Heart left ventricle (tissue), 16 donors: ENCODE measurements at regions of chr4 and their contacts with region 1.

Region 1: GRCh38 chr4:169270810-169271691 is at the start of gene SH3RF1:
- DNase-seq: peak; percentile 91 to 94 (median 92)
- ATAC-seq: peak; percentile 96 to 98 (median 96)
- H3K4me3 ChIP-seq: peak within 1 kb of the TSS; percentile 73 to 99 (median 92)
- H3K27ac ChIP-seq: peak within 1 kb of the TSS; percentile 87 to 95 (median 92)
- H3K4me1 ChIP-seq: peaks cover 0 to 47% (median 21%) of the 10 kb centered on the region in 12 donors
- H3K27me3 ChIP-seq: no peaks in the 10 kb centered on the region
- CTCF ChIP-seq: peak in 10 of 12 donors; percentile 27 to 58 (median 44)
- POLR2A ChIP-seq: peak; percentile 7 to 87
- total RNA-seq, gene SH3RF1: 7.1 to 17.2 (median 10.2) TPM

Region 2: GRCh38 chr4:169024762-169025161 is 246.3 kb before region 1 on chr4:
- intact Hi-C with region 1: loop called in 7 of 10 experiments (anchors 2 to 10 kb)
- DNase-seq: peak in 1 of 5 donors; percentile 17
- ATAC-seq: peak; percentile 58 to 87 (median 82)
- H3K4me3 ChIP-seq: no peak overlapping the region
- H3K27ac ChIP-seq: no peak overlapping the region
- H3K4me1 ChIP-seq: peaks cover 0 to 4% (median 0%) of the 10 kb centered on the region in 12 donors
- H3K27me3 ChIP-seq: no peaks in the 10 kb centered on the region
- CTCF ChIP-seq: peak; percentile 47 to 74 (median 68)
- POLR2A ChIP-seq: no peak

Region 3: DNA sequence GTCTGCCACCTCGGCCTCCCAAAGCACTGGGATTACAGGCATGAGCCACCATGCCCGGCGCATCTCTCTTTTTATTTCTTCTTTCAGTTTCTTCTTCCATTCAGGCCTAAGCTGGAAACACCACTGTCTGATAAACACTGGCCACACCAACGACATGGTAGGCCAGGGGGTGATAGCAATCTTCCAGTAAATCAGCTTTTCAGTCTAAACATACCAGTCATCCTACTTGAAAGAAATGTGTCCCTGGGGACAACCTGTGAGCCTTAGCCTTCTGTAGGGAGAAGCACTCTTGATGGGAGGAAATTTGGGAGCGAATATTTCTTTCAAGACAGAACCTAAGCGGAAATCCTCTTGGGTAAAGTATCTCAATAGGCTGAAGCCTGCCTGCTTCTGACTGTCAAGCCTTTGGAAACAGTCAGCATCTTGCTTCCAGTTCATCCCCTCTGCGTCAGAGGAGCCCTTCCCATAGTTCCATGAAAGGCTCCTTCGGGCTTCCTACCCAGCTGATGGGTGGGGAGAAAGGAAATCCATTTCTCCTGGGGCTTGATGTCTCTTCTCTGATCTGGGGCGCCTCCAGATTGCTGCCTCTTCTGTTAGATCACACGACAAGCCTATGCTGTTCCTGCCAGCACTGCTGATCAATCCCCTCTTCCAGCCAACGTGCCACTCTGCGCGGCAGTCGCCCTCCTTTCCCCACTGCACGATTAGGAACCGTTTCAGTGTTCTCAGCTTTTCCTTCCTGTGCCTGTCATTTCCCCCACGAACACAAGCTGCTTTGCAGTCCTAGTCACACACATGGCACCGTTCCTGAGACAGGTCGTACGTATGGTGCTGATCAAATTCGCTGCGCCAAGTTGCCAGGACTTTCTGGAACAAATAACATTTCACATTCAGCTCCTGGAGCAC is 211.5 kb before region 1 on chr4:
- intact Hi-C with region 1: loop called in 2 of 10 experiments (anchors 2 to 10 kb)
- DNase-seq: peak in 4 of 5 donors; percentile 57 to 74 (median 69)
- ATAC-seq: peak; percentile 64 to 90 (median 74)
- H3K4me3 ChIP-seq: peak overlapping the region in 6 of 12 donors; percentile 7 to 30 (median 17)
- H3K27ac ChIP-seq: peak overlapping the region; percentile 56 to 93 (median 86)
- H3K4me1 ChIP-seq: peaks cover 0 to 60% (median 36%) of the 10 kb centered on the region in 12 donors
- H3K27me3 ChIP-seq: no peaks in the 10 kb centered on the region
- CTCF ChIP-seq: no peak
- POLR2A ChIP-seq: no peak

Region 4: GRCh38 chr4:169147191-169147590 is 123.9 kb before region 1 on chr4:
- intact Hi-C with region 1: loop called in 1 of 10 experiments (anchors 10 kb)
- DNase-seq: no peak
- ATAC-seq: no peak
- H3K4me3 ChIP-seq: no peak overlapping the region
- H3K27ac ChIP-seq: no peak overlapping the region
- H3K4me1 ChIP-seq: peaks cover 0 to 12% (median 0%) of the 10 kb centered on the region in 12 donors
- H3K27me3 ChIP-seq: no peaks in the 10 kb centered on the region
- CTCF ChIP-seq: no peak
- POLR2A ChIP-seq: no peak

Region 5: GRCh38 chr4:169311643-169312365 is 40.8 kb after region 1 on chr4:
- intact Hi-C with region 1: loop called in 4 of 10 experiments (anchors 2 to 5 kb)
- DNase-seq: peak in 2 of 5 donors; percentile 32 to 40
- ATAC-seq: peak; percentile 39 to 87 (median 84)
- H3K4me3 ChIP-seq: no peak overlapping the region
- H3K27ac ChIP-seq: no peak overlapping the region
- H3K4me1 ChIP-seq: peaks cover 6 to 25% (median 19%) of the 10 kb centered on the region in 12 donors
- H3K27me3 ChIP-seq: no peaks in the 10 kb centered on the region
- CTCF ChIP-seq: peak; percentile 47 to 76 (median 58)
- POLR2A ChIP-seq: no peak

Region 6: DNA sequence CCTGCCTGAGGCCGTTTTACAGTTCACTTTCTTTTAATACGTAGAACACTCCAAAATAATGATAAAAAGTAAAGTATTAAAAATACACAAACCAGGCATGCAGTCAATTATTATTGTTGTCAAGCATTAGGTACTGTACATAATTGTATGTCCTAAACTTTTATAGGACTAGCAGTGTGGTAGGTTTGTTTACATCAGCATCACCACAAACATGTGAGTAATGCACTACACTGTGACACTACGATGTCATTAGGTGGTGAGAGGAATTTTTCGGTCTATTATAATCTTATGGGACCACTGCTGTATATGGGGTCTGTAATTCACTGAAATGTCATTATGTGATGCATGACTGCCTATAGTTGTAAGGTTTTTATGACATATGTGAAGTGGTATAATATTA is 149.2 kb after region 1 on chr4:
- intact Hi-C with region 1: loop called in 1 of 10 experiments (anchors 5 kb)
- DNase-seq: no peak
- ATAC-seq: no peak
- H3K4me3 ChIP-seq: no peak overlapping the region
- H3K27ac ChIP-seq: no peak overlapping the region
- H3K4me1 ChIP-seq: no peaks in the 10 kb centered on the region
- H3K27me3 ChIP-seq: no peaks in the 10 kb centered on the region
- CTCF ChIP-seq: no peak
- POLR2A ChIP-seq: no peak

Region 7: GRCh38 chr4:169640261-169640870 is 369.3 kb after region 1 on chr4:
- intact Hi-C with region 1: no loop called
- DNase-seq: no peak
- ATAC-seq: no peak
- H3K4me3 ChIP-seq: no peak overlapping the region
- H3K27ac ChIP-seq: peak overlapping the region in 4 of 12 donors; percentile 9 to 16 (median 10)
- H3K4me1 ChIP-seq: peaks cover 0 to 19% (median 2%) of the 10 kb centered on the region in 12 donors
- H3K27me3 ChIP-seq: no peaks in the 10 kb centered on the region
- CTCF ChIP-seq: no peak
- POLR2A ChIP-seq: no peak